ENCODE measurements at regions of chr12 and their contacts with region 1.

Region 1: GRCh38 chr12:96985480-96986362 is 78.7 kb downstream of the NEDD1 start:
- DNase-seq: no peak
- ATAC-seq: peak; percentile 95
- H3K4me3 ChIP-seq: peak overlapping the region; percentile 28; the same call in 1 of the 2 replicates
- H3K27ac ChIP-seq: no peak overlapping the region
- H3K4me1 ChIP-seq: peaks cover 5% of the 10 kb centered on the region
- H3K27me3 ChIP-seq: peaks cover 0 to 6% of the 10 kb centered on the region in 2 experiments; a peak in 3 of 4 replicates
- CTCF ChIP-seq: peak; percentile 78 to 90 (median 80)
- EP300 ChIP-seq: no peak
- POLR2A ChIP-seq: no peak
- RAD21 ChIP-seq: peak; percentile 84

Region 2: GRCh38 chr12:96571101-96571862 is 414.4 kb before region 1 on chr12:
- CTCF ChIA-PET with region 1: interaction called, 119 read pairs
- POLR2A ChIA-PET with region 1: no interaction called
- RAD21 ChIA-PET with region 1: interaction called, 4 read pairs
- SMC1A ChIA-PET with region 1: interaction called, 17 read pairs
- in situ Hi-C with region 1: loop called (anchors 5 kb)
- intact Hi-C with region 1: no loop called
- DNase-seq: peak; percentile 93
- ATAC-seq: peak; percentile 87
- H3K4me3 ChIP-seq: peak overlapping the region; percentile 22; the same call in 1 of the 2 replicates
- H3K27ac ChIP-seq: peak overlapping the region; percentile 88
- H3K4me1 ChIP-seq: peaks cover 20% of the 10 kb centered on the region
- H3K27me3 ChIP-seq: no peaks in the 10 kb centered on the region
- CTCF ChIP-seq: no peak
- EP300 ChIP-seq: peak; percentile 74 to 77
- POLR2A ChIP-seq: no peak
- RAD21 ChIP-seq: no peak

Region 3: GRCh38 chr12:96906849-96907670 is 78.7 kb before region 1 on chr12 and contains the start of gene NEDD1:
- CTCF ChIA-PET with region 1: interaction called, 4 read pairs
- POLR2A ChIA-PET with region 1: no interaction called
- RAD21 ChIA-PET with region 1: no interaction called
- SMC1A ChIA-PET with region 1: interaction called, 3 read pairs
- in situ Hi-C with region 1: no loop called
- intact Hi-C with region 1: loop called (anchors 10 kb)
- DNase-seq: no peak
- ATAC-seq: peak; percentile 89
- H3K4me3 ChIP-seq: peak within 1 kb of the TSS; percentile 86
- H3K27ac ChIP-seq: peak within 1 kb of the TSS; percentile 84
- H3K4me1 ChIP-seq: peaks cover 14% of the 10 kb centered on the region
- H3K27me3 ChIP-seq: no peaks in the 10 kb centered on the region
- CTCF ChIP-seq: no peak
- EP300 ChIP-seq: peak in 1 of 2 experiments; percentile 20; a peak in 1 of 4 replicates
- POLR2A ChIP-seq: peak; percentile 92
- RAD21 ChIP-seq: no peak
- polyA plus RNA-seq, gene NEDD1: 18.5 to 21.9 TPM

Region 4: GRCh38 chr12:97159362-97159761 is 173.6 kb after region 1 on chr12:
- CTCF ChIA-PET with region 1: no interaction called
- POLR2A ChIA-PET with region 1: no interaction called
- RAD21 ChIA-PET with region 1: no interaction called
- SMC1A ChIA-PET with region 1: no interaction called
- in situ Hi-C with region 1: no loop called
- intact Hi-C with region 1: no loop called
- DNase-seq: no peak
- ATAC-seq: no peak
- H3K4me3 ChIP-seq: no peak overlapping the region
- H3K27ac ChIP-seq: no peak overlapping the region
- H3K4me1 ChIP-seq: no peaks in the 10 kb centered on the region
- H3K27me3 ChIP-seq: no peaks in the 10 kb centered on the region
- CTCF ChIP-seq: no peak
- EP300 ChIP-seq: no peak
- POLR2A ChIP-seq: no peak
- RAD21 ChIP-seq: no peak

Region 5: GRCh38 chr12:97308576-97309198 is 323.0 kb after region 1 on chr12:
- CTCF ChIA-PET with region 1: interaction called, 31 read pairs
- POLR2A ChIA-PET with region 1: no interaction called
- RAD21 ChIA-PET with region 1: interaction called, 3 read pairs
- SMC1A ChIA-PET with region 1: interaction called, 6 read pairs
- in situ Hi-C with region 1: loop called (anchors 10 kb)
- intact Hi-C with region 1: loop called (anchors 2 kb)
- DNase-seq: peak; percentile 15
- ATAC-seq: peak; percentile 45; the same call in 2 of the 3 replicates
- H3K4me3 ChIP-seq: no peak overlapping the region
- H3K27ac ChIP-seq: no peak overlapping the region
- H3K4me1 ChIP-seq: no peaks in the 10 kb centered on the region
- H3K27me3 ChIP-seq: no peaks in the 10 kb centered on the region
- CTCF ChIP-seq: peak; percentile 52 to 62 (median 57); a peak in 5 of 6 replicates
- EP300 ChIP-seq: no peak
- POLR2A ChIP-seq: no peak
- RAD21 ChIP-seq: peak; percentile 61

Region 6: GRCh38 chr12:97951717-97952116 is 966.0 kb after region 1 on chr12:
- CTCF ChIA-PET with region 1: no interaction called
- POLR2A ChIA-PET with region 1: no interaction called
- RAD21 ChIA-PET with region 1: no interaction called
- SMC1A ChIA-PET with region 1: no interaction called
- in situ Hi-C with region 1: loop called (anchors 10 kb)
- intact Hi-C with region 1: no loop called
- DNase-seq: no peak
- ATAC-seq: no peak
- H3K4me3 ChIP-seq: no peak overlapping the region
- H3K27ac ChIP-seq: no peak overlapping the region
- H3K4me1 ChIP-seq: no peaks in the 10 kb centered on the region
- H3K27me3 ChIP-seq: no peaks in the 10 kb centered on the region
- CTCF ChIP-seq: no peak
- EP300 ChIP-seq: no peak
- POLR2A ChIP-seq: no peak
- RAD21 ChIP-seq: no peak